GM18951 (cell line): ENCODE measurements at regions of chr1 and their contacts with region 1.

Region 1: GRCh38 chr1:231357831-231358354 is 19.8 kb downstream of the SPRTN start:
- POLR2A ChIP-seq: no peak

Region 2: DNA sequence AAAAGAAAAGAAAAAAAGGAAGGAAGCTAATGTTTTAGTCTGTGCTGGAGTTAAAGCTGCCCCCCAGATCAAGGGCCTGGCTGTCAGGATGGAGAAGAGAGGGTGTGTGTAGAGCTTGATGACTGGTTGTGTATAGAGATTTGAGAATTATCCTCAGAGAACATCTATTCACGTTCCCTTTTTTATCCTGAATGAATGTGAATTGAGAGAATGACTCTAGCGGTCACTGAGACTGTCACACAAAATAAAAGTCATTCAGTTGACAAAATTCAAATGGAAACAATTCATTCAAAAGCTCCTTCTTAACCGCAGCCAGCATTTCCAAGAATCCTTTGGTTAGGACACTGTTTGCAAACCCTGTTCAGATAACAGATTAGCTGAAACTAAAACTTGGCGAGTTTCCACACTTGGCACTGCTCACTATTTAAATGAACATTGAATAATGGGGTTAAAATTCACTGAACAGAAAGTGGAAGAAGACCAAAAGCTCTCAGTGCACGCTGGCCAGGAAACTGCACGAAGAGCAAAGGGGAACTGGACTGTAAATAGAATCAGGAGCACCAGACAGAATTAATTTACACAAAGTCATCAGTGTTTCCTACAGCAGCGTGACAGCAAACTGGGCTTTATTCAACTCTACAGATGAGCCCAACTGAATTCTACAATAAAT is 304.3 kb before region 1 on chr1:
- in situ Hi-C with region 1: no loop called
- POLR2A ChIP-seq: no peak

Region 3: DNA sequence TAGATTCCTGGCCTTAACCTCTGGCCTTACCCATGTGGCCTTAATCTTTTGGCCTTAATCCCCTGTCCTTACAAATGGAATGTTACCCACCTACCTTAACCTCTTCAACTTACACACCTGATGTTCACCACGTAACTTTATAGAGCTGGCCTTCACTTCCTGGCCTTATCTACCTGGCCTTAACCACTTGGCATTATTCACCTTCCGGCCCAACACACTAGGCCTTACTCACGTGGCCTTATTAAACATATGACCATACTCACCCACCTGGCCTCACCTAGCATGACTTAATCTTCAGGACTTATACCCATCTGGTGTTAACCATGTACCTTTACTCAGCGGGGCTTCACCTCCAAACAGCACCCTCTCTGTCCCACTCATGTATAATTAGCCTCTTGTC is 62.0 kb before region 1 on chr1:
- in situ Hi-C with region 1: no loop called
- POLR2A ChIP-seq: no peak

Region 4: DNA sequence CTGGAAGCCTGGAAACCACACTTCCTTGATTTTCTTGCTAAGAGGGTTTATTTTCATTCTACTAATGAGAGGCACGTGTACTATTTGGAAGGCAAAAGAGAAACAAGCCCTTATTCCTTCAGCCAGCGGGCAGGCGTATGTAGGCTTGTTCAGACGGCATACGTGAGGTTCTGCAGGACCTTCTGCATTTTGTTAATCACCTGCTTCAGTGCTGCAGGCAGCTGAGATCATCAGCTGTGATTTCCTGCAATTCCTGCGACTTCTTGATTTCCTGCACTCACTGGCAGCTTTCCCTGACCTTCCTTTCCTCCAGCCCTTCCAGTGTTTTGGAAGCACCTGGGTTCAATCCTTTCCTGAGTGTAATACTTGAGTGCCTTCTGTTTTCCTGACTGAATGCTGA is 214.0 kb after region 1 on chr1:
- in situ Hi-C with region 1: loop called (anchors 10 kb)
- POLR2A ChIP-seq: no peak

Region 5: GRCh38 chr1:231603598-231604275 is 245.8 kb after region 1 on chr1:
- in situ Hi-C with region 1: loop called (anchors 5 kb)
- POLR2A ChIP-seq: no peak